IMR-90 (cell line): ENCODE measurements at regions of chr12 and their contacts with region 1.

Region 1: GRCh38 chr12:75568393-75568792 is 57.0 kb upstream of the KRR1 start:
- DNase-seq: peak; percentile 26
- ATAC-seq: peak; percentile 41
- H3K4me3 ChIP-seq: no peak overlapping the region
- H3K27ac ChIP-seq: peak overlapping the region; percentile 94
- H3K4me1 ChIP-seq: peaks cover 25% of the 10 kb centered on the region
- H3K27me3 ChIP-seq: no peaks in the 10 kb centered on the region
- CTCF ChIP-seq: no peak
- POLR2A ChIP-seq: no peak
- RAD21 ChIP-seq: no peak

Region 2: GRCh38 chr12:75642226-75642625 is 73.8 kb after region 1 on chr12:
- CTCF ChIA-PET with region 1: no interaction called
- POLR2A ChIA-PET with region 1: no interaction called
- dilution Hi-C with region 1: no loop called
- in situ Hi-C with region 1: no loop called
- intact Hi-C with region 1: no loop called
- DNase-seq: no peak
- ATAC-seq: no peak
- H3K4me3 ChIP-seq: no peak overlapping the region
- H3K27ac ChIP-seq: no peak overlapping the region
- H3K4me1 ChIP-seq: peaks cover 2% of the 10 kb centered on the region; the same call in 1 of the 2 replicates
- H3K27me3 ChIP-seq: no peaks in the 10 kb centered on the region
- CTCF ChIP-seq: no peak
- POLR2A ChIP-seq: no peak
- RAD21 ChIP-seq: no peak

Region 3: GRCh38 chr12:75657831-75658230 is 89.4 kb after region 1 on chr12:
- CTCF ChIA-PET with region 1: no interaction called
- POLR2A ChIA-PET with region 1: interaction called, 10 read pairs
- dilution Hi-C with region 1: no loop called
- in situ Hi-C with region 1: no loop called
- intact Hi-C with region 1: no loop called
- DNase-seq: no peak
- ATAC-seq: no peak
- H3K4me3 ChIP-seq: no peak overlapping the region
- H3K27ac ChIP-seq: peak overlapping the region; percentile 64
- H3K4me1 ChIP-seq: peaks cover 23% of the 10 kb centered on the region
- H3K27me3 ChIP-seq: no peaks in the 10 kb centered on the region
- CTCF ChIP-seq: no peak
- POLR2A ChIP-seq: no peak
- RAD21 ChIP-seq: no peak